ENCODE measurements at regions of chr18 and their contacts with region 1.

Region 1: DNA sequence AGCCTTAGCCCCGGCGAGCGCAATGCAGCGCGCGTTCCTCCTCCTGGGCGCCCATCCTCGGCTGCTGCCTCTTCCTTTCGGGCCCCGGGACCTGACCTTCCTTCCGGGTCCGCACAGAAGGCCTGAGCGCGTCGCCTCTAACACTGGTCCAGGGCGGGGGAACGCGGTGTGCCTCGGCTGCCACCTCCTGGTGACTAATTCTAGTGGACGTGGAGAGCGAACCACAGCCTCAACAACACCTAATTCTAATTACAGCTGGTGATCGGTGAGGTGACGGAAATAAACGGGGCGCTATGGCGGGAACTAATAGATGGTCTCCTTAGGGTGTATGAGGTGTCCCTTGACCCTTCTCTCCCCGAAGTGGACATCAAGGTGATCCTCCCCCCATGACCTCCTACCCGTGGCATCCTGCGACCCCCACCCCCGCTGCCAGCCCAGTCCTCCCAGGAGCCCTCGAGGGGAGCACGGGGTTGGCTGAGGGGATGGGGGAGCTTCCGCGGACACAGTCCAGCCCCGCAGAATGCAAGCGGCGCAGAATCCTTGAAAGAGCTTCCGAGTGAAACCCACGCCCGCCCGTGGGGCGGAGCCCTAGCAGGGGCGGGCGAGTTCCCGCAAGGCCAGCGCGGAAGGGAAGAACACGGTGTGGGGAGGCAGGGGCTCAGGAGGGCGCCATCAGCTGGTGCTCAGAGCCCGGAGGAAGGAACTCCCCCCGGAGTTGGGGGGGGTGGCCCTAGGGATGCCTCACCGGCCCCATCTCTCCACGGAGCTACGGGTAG is 12.8 kb upstream of the HMSD start:
- DNase-seq: peak; percentile 90
- H3K4me3 Mint-ChIP-seq: no peak overlapping the region
- H3K27ac Mint-ChIP-seq: peak overlapping the region; percentile 40
- H3K4me1 Mint-ChIP-seq: no peaks in the 10 kb centered on the region
- H3K27me3 Mint-ChIP-seq: no peaks in the 10 kb centered on the region
- CTCF ChIP-seq: peak; percentile 75

Region 2: DNA sequence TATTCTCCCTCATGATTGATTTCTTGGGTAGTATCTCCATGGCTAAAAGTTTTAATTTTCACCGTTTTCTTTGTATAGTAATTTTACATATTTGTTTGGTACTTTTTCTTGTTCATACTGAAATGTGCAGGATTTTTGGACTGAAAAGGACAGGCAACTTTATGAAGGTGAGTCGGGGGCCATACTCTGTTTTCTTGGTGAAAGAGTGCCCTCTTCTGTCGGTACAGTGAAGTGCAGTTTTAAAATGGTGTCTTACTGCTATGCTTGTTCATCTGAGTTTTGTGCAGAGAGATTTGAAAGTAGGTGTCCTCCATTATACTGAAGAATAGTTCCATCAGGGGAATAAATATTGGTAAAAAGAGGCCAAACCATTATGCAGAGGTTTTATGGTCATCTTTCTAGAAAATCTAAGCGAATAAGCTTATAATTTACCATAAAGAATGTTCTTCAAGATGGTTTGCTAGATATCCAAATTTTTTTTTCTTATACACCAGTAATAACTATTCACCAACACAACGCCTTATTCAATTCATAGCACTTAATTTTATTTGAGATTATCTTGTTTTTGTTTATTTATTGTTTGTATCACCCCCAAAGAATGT is 357.9 kb before region 1 on chr18:
- CTCF ChIA-PET with region 1: interaction called, 19 read pairs
- POLR2A ChIA-PET with region 1: no interaction called
- intact Hi-C with region 1: loop called (anchors 2 kb)
- DNase-seq: peak; percentile 67
- H3K4me3 Mint-ChIP-seq: no peak overlapping the region
- H3K27ac Mint-ChIP-seq: no peak overlapping the region
- H3K4me1 Mint-ChIP-seq: peaks cover 15% of the 10 kb centered on the region
- H3K27me3 Mint-ChIP-seq: no peaks in the 10 kb centered on the region
- CTCF ChIP-seq: peak; percentile 75

Region 3: GRCh38 chr18:63848159-63848558 is 88.2 kb before region 1 on chr18:
- CTCF ChIA-PET with region 1: interaction called, 65 read pairs
- POLR2A ChIA-PET with region 1: interaction called, 3 read pairs
- intact Hi-C with region 1: loop called (anchors 1 kb)
- DNase-seq: peak; percentile 73
- H3K4me3 Mint-ChIP-seq: no peak overlapping the region
- H3K27ac Mint-ChIP-seq: no peak overlapping the region
- H3K4me1 Mint-ChIP-seq: no peaks in the 10 kb centered on the region
- H3K27me3 Mint-ChIP-seq: no peaks in the 10 kb centered on the region
- CTCF ChIP-seq: peak; percentile 64

Region 4: GRCh38 chr18:63882333-63883141 is 53.8 kb before region 1 on chr18:
- CTCF ChIA-PET with region 1: interaction called, 12 read pairs
- POLR2A ChIA-PET with region 1: interaction called, 4 read pairs
- intact Hi-C with region 1: loop called (anchors 2 kb)
- DNase-seq: peak; percentile 89
- H3K4me3 Mint-ChIP-seq: no peak overlapping the region
- H3K27ac Mint-ChIP-seq: peak overlapping the region; percentile 75
- H3K4me1 Mint-ChIP-seq: peaks cover 34% of the 10 kb centered on the region
- H3K27me3 Mint-ChIP-seq: no peaks in the 10 kb centered on the region
- CTCF ChIP-seq: no peak

Region 5: DNA sequence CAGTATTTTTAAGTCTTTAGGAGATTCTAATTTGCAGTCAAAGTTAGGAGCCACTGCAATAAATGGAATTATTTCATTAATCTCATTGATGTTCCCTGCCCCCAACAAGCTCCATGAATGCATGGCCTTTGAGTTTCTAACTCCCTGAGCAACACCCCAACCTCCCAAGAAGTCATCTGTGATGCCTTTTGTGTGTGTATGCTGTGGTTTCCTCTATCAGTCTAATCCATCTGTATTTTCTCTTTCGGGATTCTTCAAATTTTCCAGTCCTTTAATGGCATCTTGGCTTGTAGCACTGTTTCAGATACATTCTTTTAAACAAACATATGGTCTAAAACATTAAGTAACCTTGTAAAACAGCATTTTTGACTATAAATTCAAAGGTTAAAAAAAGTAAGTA is 11.8 kb before region 1 on chr18:
- CTCF ChIA-PET with region 1: interaction called, 30 read pairs
- POLR2A ChIA-PET with region 1: interaction called, 4 read pairs
- intact Hi-C with region 1: no loop called
- DNase-seq: no peak
- H3K4me3 Mint-ChIP-seq: no peak overlapping the region
- H3K27ac Mint-ChIP-seq: no peak overlapping the region
- H3K4me1 Mint-ChIP-seq: no peaks in the 10 kb centered on the region
- H3K27me3 Mint-ChIP-seq: no peaks in the 10 kb centered on the region
- CTCF ChIP-seq: no peak

Measured in MCF 10A (cell line).